Activated naive CD4-positive, alpha-beta T cell treated with anti-CD3 and anti-CD28 coated beads, Interleukin-2, amount 10 ng/mL, durations not matched to agents 7 days and 5 days (primary cell): ENCODE measurements at regions of chr19 and their contacts with region 1.

Region 1: DNA sequence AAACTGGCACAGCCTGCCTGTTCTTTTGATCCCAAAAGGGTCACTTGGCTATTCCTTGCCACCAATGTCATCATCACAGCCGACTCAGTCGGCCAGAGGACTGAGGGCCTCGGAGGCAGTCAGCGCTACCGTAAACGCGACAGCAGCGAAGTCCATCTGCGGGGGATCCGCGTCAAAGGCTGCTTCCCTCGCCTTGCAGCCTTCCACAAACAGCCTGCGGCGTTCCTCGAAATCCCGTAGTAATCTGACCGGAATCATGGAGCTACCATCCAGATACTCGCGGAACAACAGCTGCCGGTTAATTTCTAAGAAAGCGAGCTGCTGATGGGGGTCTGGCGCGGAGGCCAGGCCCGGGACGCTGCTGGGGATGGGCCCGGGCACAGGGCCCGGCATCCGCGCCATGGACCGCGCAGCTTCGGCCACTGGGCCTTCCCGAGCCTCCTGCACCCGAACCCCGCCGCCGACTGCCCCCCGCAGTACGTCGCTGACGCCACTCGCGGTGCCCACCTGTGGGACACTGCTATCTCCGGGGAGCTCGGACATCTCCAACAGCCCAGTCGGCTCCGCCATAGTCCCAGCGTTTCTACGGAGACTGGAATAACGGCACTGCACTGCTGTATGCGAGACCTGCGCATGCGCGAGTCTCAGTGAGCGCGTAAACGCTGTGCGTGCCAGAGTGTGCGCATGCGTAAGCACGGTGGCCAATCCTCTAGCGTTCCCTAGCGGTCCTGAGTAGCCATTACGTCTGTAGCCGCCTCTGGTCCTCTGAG is at the start of gene EID2B:
- DNase-seq: peak; percentile 96
- H3K4me3 Mint-ChIP-seq: peak within 1 kb of the TSS; percentile 89
- H3K27ac Mint-ChIP-seq: peak within 1 kb of the TSS; percentile 78
- H3K4me1 Mint-ChIP-seq: peaks cover 29% of the 10 kb centered on the region
- H3K27me3 Mint-ChIP-seq: no peaks in the 10 kb centered on the region

Region 2: GRCh38 chr19:39438270-39438934 is 94.0 kb before region 1 on chr19:
- CTCF ChIA-PET with region 1: interaction called, 53 read pairs
- DNase-seq: no peak
- H3K4me3 Mint-ChIP-seq: no peak overlapping the region
- H3K27ac Mint-ChIP-seq: no peak overlapping the region
- H3K4me1 Mint-ChIP-seq: peaks cover 46% of the 10 kb centered on the region
- H3K27me3 Mint-ChIP-seq: peaks cover 18% of the 10 kb centered on the region

Region 3: DNA sequence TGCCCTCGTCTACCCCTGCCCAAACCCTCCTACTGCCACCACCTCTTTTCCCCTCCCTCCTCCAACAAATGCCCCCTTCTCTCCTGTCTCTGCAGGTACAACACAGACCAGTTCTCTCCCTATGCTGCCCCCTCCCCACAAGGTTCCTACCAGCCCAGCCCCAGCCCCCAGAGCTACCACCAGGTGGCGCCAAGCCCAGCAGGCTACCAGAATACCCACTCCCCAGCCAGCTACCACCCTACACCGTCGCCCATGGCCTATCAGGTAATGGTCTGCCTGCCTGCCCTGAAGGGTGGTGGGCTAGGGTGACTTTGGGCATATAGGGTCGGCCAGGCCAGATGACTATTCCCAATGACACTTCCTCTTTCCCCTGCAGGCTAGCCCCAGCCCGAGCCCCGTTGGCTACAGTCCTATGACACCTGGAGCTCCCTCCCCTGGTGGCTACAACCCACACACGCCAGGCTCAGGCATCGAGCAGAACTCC is 58.2 kb before region 1 on chr19:
- CTCF ChIA-PET with region 1: interaction called, 17 read pairs
- DNase-seq: peak; percentile 81
- H3K4me3 Mint-ChIP-seq: no peak overlapping the region
- H3K27ac Mint-ChIP-seq: peak overlapping the region; percentile 45
- H3K4me1 Mint-ChIP-seq: peaks cover 2% of the 10 kb centered on the region
- H3K27me3 Mint-ChIP-seq: no peaks in the 10 kb centered on the region

Region 4: GRCh38 chr19:39728040-39728439 is 195.6 kb after region 1 on chr19:
- CTCF ChIA-PET with region 1: no interaction called
- DNase-seq: no peak
- H3K4me3 Mint-ChIP-seq: no peak overlapping the region
- H3K27ac Mint-ChIP-seq: no peak overlapping the region
- H3K4me1 Mint-ChIP-seq: no peaks in the 10 kb centered on the region
- H3K27me3 Mint-ChIP-seq: peaks cover 17% of the 10 kb centered on the region